ENCODE measurements at regions of chr11 and their contacts with region 1.

Region 1: GRCh38 chr11:73335204-73335923 is 27.3 kb downstream of the ARHGEF17 start:
- DNase-seq: peak; percentile 87 to 94
- H3K4me3 ChIP-seq: no peak overlapping the region
- H3K27ac ChIP-seq: peak overlapping the region in 4 of 5 donors; percentile 42 to 80 (median 72)
- H3K4me1 ChIP-seq: peaks cover 37 to 86% (median 62%) of the 10 kb centered on the region in 4 donors
- H3K27me3 ChIP-seq: no peaks in the 10 kb centered on the region
- CTCF ChIP-seq: peak in 6 of 7 experiments; percentile 24 to 99 (median 96)
- EP300 ChIP-seq: no peak
- POLR2A ChIP-seq: no peak

Region 2: GRCh38 chr11:73295231-73295995 is 40.0 kb before region 1 on chr11:
- intact Hi-C with region 1: loop called (anchors 5 kb)
- DNase-seq: peak; percentile 72 to 83
- H3K4me3 ChIP-seq: no peak overlapping the region
- H3K27ac ChIP-seq: no peak overlapping the region
- H3K4me1 ChIP-seq: peaks cover 0 to 10% (median 3%) of the 10 kb centered on the region in 4 donors
- H3K27me3 ChIP-seq: peaks cover 0 to 22% (median 0%) of the 10 kb centered on the region in 3 donors
- CTCF ChIP-seq: peak in 5 of 7 experiments; percentile 72 to 89 (median 82)
- EP300 ChIP-seq: no peak
- POLR2A ChIP-seq: no peak

Measured in stomach (tissue), 19 donors.